ENCODE measurements at regions of chr1 and their contacts with region 1.

Region 1: GRCh38 chr1:8848663-8849386 is 29.7 kb downstream of the ENO1 start:
- DNase-seq: peak; percentile 95
- H3K4me3 Mint-ChIP-seq: no peak overlapping the region
- H3K27ac Mint-ChIP-seq: no peak overlapping the region
- H3K4me1 Mint-ChIP-seq: peaks cover 4% of the 10 kb centered on the region
- H3K27me3 Mint-ChIP-seq: peaks cover 4% of the 10 kb centered on the region
- CTCF ChIP-seq: peak; percentile 88

Region 2: GRCh38 chr1:8560611-8561544 is 287.9 kb before region 1 on chr1:
- CTCF ChIA-PET with region 1: interaction called, 17 read pairs
- POLR2A ChIA-PET with region 1: interaction called, 8 read pairs
- intact Hi-C with region 1: loop called (anchors 1 kb)
- DNase-seq: peak; percentile 69
- H3K4me3 Mint-ChIP-seq: no peak overlapping the region
- H3K27ac Mint-ChIP-seq: no peak overlapping the region
- H3K4me1 Mint-ChIP-seq: peaks cover 6% of the 10 kb centered on the region
- H3K27me3 Mint-ChIP-seq: no peaks in the 10 kb centered on the region
- CTCF ChIP-seq: peak; percentile 84

Region 3: DNA sequence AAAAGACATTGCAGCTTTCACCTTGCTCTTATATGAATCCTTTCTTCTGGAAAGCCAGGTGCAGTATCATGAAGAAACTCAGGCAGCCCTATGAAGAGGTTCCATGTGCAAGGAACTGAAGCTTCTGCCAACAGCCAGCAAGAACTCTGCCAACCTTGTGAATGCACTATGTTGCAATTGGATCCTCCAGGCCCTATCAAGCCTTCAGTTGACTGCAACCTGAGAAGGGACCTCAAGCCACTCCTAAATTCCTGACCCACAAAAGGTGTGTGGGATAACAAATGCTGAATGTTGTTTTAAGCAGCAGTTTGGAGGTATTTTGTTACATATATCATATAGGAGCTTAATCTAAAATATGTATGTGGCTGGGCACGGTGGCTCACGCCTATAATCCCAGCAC is 115.4 kb before region 1 on chr1:
- CTCF ChIA-PET with region 1: interaction called, 36 read pairs
- POLR2A ChIA-PET with region 1: interaction called, 6 read pairs
- intact Hi-C with region 1: loop called (anchors 2 kb)
- DNase-seq: peak; percentile 96
- H3K4me3 Mint-ChIP-seq: no peak overlapping the region
- H3K27ac Mint-ChIP-seq: no peak overlapping the region
- H3K4me1 Mint-ChIP-seq: peaks cover 6% of the 10 kb centered on the region
- H3K27me3 Mint-ChIP-seq: no peaks in the 10 kb centered on the region
- CTCF ChIP-seq: no peak

Region 4: DNA sequence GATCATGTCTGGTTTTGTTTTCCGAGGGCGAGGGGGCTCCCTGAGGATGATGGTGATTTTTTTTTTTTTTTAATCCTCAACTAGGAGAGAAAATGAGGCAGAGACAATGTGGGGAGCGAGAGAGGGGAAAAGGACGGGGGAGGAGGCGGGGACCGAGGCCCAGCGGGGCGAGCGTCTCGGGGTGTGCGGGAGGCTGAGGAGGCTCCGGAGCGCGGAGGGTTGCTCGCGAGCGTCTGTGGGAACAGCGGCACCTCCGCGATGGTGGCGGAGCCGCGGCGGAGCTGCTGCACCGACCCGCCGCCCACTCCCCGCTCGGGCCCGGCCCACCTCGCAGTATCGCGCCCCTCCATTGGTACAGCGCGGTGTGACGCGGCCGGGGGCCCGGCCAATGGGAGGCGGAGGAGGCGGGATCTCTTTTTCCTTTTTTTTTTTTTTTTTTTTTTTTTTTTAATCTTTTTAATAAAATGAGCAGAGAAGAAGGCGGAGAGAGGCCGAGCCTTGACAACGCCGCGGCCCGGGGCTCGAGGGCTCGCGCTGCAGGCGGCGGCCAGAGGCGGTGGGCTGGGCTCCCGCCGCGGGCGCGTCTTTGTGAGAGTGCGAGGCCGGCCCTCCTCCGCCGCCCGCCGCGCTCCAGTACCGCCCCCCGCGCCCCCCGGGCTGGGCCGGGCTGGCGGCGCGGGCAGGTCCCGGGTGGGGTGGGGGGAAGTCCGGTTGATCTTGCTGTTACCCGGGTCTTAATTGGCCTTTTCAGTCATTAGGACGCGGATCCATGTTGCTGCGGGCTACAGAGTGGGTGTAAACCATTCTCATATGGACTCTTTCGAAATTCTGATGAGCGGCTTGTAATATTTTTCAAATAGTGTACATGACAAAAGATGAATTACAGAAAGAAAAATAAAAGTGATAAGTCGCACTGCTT is 31.2 kb before region 1 on chr1 and contains the start of gene RERE:
- CTCF ChIA-PET with region 1: interaction called, 19 read pairs
- POLR2A ChIA-PET with region 1: interaction called, 21 read pairs
- intact Hi-C with region 1: no loop called
- DNase-seq: peak; percentile 93
- H3K4me3 Mint-ChIP-seq: peak within 1 kb of the TSS; percentile 84
- H3K27ac Mint-ChIP-seq: peak within 1 kb of the TSS; percentile 97
- H3K4me1 Mint-ChIP-seq: peaks cover 44% of the 10 kb centered on the region
- H3K27me3 Mint-ChIP-seq: no peaks in the 10 kb centered on the region
- CTCF ChIP-seq: no peak
- total RNA-seq, gene RERE: 36.8 and 48.4 TPM in 2 replicates

Region 5: GRCh38 chr1:8835941-8836643 is 12.7 kb before region 1 on chr1:
- CTCF ChIA-PET with region 1: interaction called, 12 read pairs
- POLR2A ChIA-PET with region 1: interaction called, 3 read pairs
- intact Hi-C with region 1: no loop called
- DNase-seq: no peak
- H3K4me3 Mint-ChIP-seq: no peak overlapping the region
- H3K27ac Mint-ChIP-seq: no peak overlapping the region
- H3K4me1 Mint-ChIP-seq: no peaks in the 10 kb centered on the region
- H3K27me3 Mint-ChIP-seq: no peaks in the 10 kb centered on the region
- CTCF ChIP-seq: no peak

Region 6: DNA sequence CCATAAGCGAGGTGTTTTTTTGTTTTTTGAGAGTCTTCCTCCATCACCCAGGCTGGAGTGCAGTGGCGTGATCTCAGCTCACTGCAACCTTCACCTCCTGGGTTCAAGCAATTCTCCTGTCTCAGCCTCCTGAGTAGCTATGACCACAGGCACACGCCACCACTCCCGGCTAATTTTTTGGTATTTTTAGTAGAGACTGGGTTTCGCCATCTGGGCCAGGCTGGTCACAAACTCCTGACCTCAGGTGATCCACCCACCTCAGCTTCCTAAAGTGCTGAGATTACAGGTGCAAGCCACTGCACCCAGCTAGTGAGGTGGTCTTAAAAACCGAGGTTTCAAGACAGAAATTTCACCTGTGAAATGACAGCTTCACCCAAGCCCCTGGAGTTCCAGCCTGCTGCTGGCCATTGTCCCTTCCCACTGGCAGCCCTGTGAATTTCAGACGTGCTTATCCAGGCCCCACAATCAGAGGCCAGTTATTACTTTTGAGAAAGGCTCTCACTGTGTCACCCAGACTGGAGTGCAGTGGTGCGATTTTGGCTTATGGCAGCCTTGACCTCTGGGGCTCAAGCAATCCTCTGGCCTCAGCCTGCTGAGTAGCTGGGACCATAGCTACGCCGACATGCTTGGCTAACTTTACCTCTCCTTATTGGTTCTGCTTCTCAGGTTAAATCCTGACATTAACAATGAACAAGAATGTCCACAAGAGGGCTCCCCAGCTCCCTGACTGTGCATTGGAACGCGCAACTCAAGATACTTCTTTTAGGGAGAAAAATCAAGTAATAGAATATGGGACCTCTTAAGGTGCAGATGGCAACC is 10.3 kb after region 1 on chr1:
- CTCF ChIA-PET with region 1: interaction called, 59 read pairs
- POLR2A ChIA-PET with region 1: interaction called, 9 read pairs
- intact Hi-C with region 1: no loop called
- DNase-seq: peak; percentile 65
- H3K4me3 Mint-ChIP-seq: no peak overlapping the region
- H3K27ac Mint-ChIP-seq: peak overlapping the region; percentile 66
- H3K4me1 Mint-ChIP-seq: no peaks in the 10 kb centered on the region
- H3K27me3 Mint-ChIP-seq: no peaks in the 10 kb centered on the region
- CTCF ChIP-seq: peak; percentile 45

Measured in MCF 10A (cell line).